HepG2 (cell line): ENCODE measurements at regions of chr7 and their contacts with region 1.

Region 1: GRCh38 chr7:109713366-109713765 is 1143.7 kb downstream of the DNAJB9 start:
- DNase-seq: no peak
- ATAC-seq: no peak
- H3K4me3 ChIP-seq: no peak overlapping the region
- H3K27ac ChIP-seq: no peak overlapping the region
- H3K4me1 ChIP-seq: no peaks in the 10 kb centered on the region
- H3K27me3 ChIP-seq: no peaks in the 10 kb centered on the region
- CTCF ChIP-seq: no peak
- EP300 ChIP-seq: no peak
- POLR2A ChIP-seq: no peak
- RAD21 ChIP-seq: no peak

Region 2: GRCh38 chr7:109751241-109751640 is 37.9 kb after region 1 on chr7:
- CTCF ChIA-PET with region 1: no interaction called
- POLR2A ChIA-PET with region 1: no interaction called
- in situ Hi-C with region 1: no loop called
- intact Hi-C with region 1: loop called (anchors 1 kb)
- DNase-seq: peak; percentile 3
- ATAC-seq: no peak
- H3K4me3 ChIP-seq: no peak overlapping the region
- H3K27ac ChIP-seq: no peak overlapping the region
- H3K4me1 ChIP-seq: no peaks in the 10 kb centered on the region
- H3K27me3 ChIP-seq: no peaks in the 10 kb centered on the region
- CTCF ChIP-seq: no peak
- EP300 ChIP-seq: no peak
- POLR2A ChIP-seq: no peak
- RAD21 ChIP-seq: no peak

Region 3: DNA sequence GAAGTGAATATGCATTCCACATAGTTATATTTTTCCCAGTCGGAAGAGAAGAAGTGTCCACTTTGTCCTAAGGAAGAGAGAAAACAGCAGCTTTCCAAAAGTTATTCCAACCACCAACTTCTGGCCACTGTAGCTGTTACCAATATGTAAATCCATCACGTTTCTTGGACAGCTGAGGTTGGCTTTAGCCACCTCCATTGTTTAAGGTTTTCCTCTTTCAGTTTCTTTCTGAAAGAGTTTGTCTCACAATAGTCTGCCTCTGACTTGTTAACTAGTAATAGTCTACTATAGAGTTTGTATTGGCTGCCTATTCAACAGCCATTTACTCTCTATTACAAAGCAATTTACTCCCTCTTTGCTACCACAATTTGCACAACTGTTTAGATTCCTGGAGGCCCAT is 919.9 kb after region 1 on chr7:
- CTCF ChIA-PET with region 1: no interaction called
- POLR2A ChIA-PET with region 1: no interaction called
- in situ Hi-C with region 1: no loop called
- intact Hi-C with region 1: no loop called
- DNase-seq: no peak
- ATAC-seq: no peak
- H3K4me3 ChIP-seq: no peak overlapping the region
- H3K27ac ChIP-seq: no peak overlapping the region
- H3K4me1 ChIP-seq: no peaks in the 10 kb centered on the region
- H3K27me3 ChIP-seq: no peaks in the 10 kb centered on the region; a peak in 1 of 5 replicates
- CTCF ChIP-seq: no peak
- EP300 ChIP-seq: no peak
- POLR2A ChIP-seq: no peak
- RAD21 ChIP-seq: no peak